Transverse colon (tissue), 4 donors: ENCODE measurements at regions of chr17 and their contacts with region 1.

Region 1: GRCh38 chr17:49162866-49163265 is 30.3 kb downstream of the B4GALNT2 start:
- DNase-seq: no peak
- H3K4me3 ChIP-seq: no peak overlapping the region
- H3K27ac ChIP-seq: no peak overlapping the region
- H3K4me1 ChIP-seq: no peaks in the 10 kb centered on the region
- H3K27me3 ChIP-seq: peaks cover 8% of the 10 kb centered on the region
- CTCF ChIP-seq: no peak
- EP300 ChIP-seq: no peak
- POLR2A ChIP-seq: no peak

Region 2: DNA sequence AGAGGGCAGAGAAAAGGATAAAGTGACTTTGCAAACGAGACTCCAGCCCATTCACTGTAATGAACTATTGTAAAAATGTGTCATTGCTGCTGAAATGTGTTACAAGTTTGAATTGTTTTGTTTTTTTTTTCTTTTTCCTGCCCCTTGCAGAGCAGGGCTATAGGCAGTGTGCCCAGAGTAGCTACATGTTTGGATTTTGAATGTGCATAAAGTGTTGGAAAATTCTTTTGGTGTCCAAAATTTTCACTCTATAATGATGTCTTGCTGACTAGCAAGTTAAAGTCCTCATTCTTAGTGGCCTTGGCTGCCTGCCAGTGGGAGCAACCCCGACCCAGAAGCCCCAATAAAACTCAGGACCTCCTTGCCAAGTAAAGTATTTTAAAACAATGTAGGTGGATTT is 99.2 kb before region 1 on chr17:
- in situ Hi-C with region 1: no loop called
- intact Hi-C with region 1: no loop called
- DNase-seq: peak; percentile 30
- H3K4me3 ChIP-seq: no peak overlapping the region
- H3K27ac ChIP-seq: no peak overlapping the region
- H3K4me1 ChIP-seq: peaks cover 0 to 10% (median 6%) of the 10 kb centered on the region in 4 donors
- H3K27me3 ChIP-seq: no peaks in the 10 kb centered on the region
- CTCF ChIP-seq: no peak
- EP300 ChIP-seq: no peak
- POLR2A ChIP-seq: no peak

Region 3: DNA sequence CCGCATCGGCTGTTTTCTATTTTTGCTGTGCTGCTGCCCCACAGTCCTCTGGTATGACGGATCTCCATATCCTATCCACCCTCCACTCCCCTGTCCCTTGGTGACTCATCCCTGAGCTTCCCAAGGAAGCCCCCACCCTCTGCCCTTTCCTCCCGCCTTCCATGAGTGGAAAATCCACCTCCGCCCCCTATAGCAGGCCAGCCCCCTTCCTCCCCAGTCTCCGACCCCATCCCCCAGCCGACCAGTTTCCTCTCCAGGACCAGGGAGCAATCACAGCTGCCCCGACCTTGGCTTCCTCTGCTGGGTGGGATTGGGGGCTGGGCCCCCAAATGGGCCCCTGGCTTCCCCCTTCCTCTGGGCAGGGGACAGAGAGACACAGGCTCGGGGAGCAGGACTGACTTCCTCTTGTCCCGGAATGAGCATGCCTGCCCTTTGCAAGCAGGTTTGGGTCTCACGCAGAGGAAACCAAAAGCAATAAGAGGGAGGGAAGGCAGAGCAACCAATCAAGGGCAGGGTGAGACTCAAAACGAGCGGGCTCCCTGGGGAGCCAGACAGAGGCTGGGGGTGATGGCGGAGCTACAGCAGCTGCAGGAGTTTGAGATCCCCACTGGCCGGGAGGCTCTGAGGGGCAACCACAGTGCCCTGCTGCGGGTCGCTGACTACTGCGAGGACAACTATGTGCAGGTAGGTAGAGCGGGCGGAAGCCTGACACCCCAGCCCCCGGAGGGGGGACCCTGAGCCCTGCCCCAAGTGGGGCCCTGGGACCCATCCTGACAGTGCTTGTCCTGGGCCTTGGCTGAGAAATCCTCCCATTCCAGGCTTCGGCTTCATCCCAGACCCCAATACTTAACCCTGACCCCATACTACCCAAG is 47.5 kb after region 1 on chr17 and contains the starts of genes ABI3 and GNGT2:
- in situ Hi-C with region 1: no loop called
- intact Hi-C with region 1: loop called (anchors 10 kb)
- DNase-seq: peak; percentile 70
- H3K4me3 ChIP-seq: peak within 1 kb of the TSS in 3 of 4 donors; percentile 25 to 44 (median 29)
- H3K27ac ChIP-seq: peak within 1 kb of the TSS; percentile 67 to 79 (median 74)
- H3K4me1 ChIP-seq: peaks cover 0 to 17% (median 3%) of the 10 kb centered on the region in 4 donors
- H3K27me3 ChIP-seq: peaks cover 9% of the 10 kb centered on the region
- CTCF ChIP-seq: no peak
- EP300 ChIP-seq: no peak
- POLR2A ChIP-seq: peak; percentile 72
- total RNA-seq, gene ABI3: 0.60 to 7.6 (median 5.9) TPM
- total RNA-seq, gene GNGT2: 0.68 to 4.0 TPM in 2 of 4 donors, not detected in the others

Region 4: GRCh38 chr17:49496183-49496866 is 333.5 kb after region 1 on chr17:
- in situ Hi-C with region 1: no loop called
- intact Hi-C with region 1: no loop called
- DNase-seq: peak; percentile 78
- H3K4me3 ChIP-seq: peak overlapping the region in 3 of 4 donors; percentile 25 to 55 (median 36)
- H3K27ac ChIP-seq: no peak overlapping the region
- H3K4me1 ChIP-seq: peaks cover 18 to 33% (median 32%) of the 10 kb centered on the region in 4 donors
- H3K27me3 ChIP-seq: peaks cover 75% of the 10 kb centered on the region
- CTCF ChIP-seq: peak; percentile 56 to 91 (median 83)
- EP300 ChIP-seq: no peak
- POLR2A ChIP-seq: no peak